CD4-positive, alpha-beta T cell (primary cell): ENCODE measurements at regions of chr12 and their contacts with region 1.

Region 1: GRCh38 chr12:12736759-12737676 is 19.9 kb downstream of the CDKN1B start:
- DNase-seq: peak in 13 of 14 experiments; percentile 15 to 87 (median 33)
- ATAC-seq: peak; percentile 82
- H3K4me3 ChIP-seq: peak overlapping the region; percentile 34
- H3K4me3 Mint-ChIP-seq: peak overlapping the region; percentile 58
- H3K27ac ChIP-seq: peak overlapping the region; percentile 34 to 40
- H3K27ac Mint-ChIP-seq: peak overlapping the region; percentile 85
- H3K4me1 ChIP-seq: peaks cover 30% of the 10 kb centered on the region
- H3K4me1 Mint-ChIP-seq: peaks cover 41% of the 10 kb centered on the region
- H3K27me3 ChIP-seq: no peaks in the 10 kb centered on the region
- H3K27me3 Mint-ChIP-seq: no peaks in the 10 kb centered on the region
- CTCF ChIP-seq: peak; percentile 71

Region 2: GRCh38 chr12:12645485-12645884 is 91.5 kb before region 1 on chr12:
- CTCF ChIA-PET with region 1: interaction called, 23 read pairs
- POLR2A ChIA-PET with region 1: interaction called, 27 read pairs
- intact Hi-C with region 1: loop called (anchors 1 to 2 kb)
- DNase-seq: peak in 12 of 14 experiments; percentile 4 to 79 (median 33)
- ATAC-seq: peak; percentile 91
- H3K4me3 ChIP-seq: no peak overlapping the region
- H3K4me3 Mint-ChIP-seq: no peak overlapping the region
- H3K27ac ChIP-seq: no peak overlapping the region
- H3K27ac Mint-ChIP-seq: peak overlapping the region; percentile 14
- H3K4me1 ChIP-seq: peaks cover 6% of the 10 kb centered on the region
- H3K4me1 Mint-ChIP-seq: peaks cover 6% of the 10 kb centered on the region
- H3K27me3 ChIP-seq: no peaks in the 10 kb centered on the region
- H3K27me3 Mint-ChIP-seq: no peaks in the 10 kb centered on the region
- CTCF ChIP-seq: peak; percentile 56

Region 3: DNA sequence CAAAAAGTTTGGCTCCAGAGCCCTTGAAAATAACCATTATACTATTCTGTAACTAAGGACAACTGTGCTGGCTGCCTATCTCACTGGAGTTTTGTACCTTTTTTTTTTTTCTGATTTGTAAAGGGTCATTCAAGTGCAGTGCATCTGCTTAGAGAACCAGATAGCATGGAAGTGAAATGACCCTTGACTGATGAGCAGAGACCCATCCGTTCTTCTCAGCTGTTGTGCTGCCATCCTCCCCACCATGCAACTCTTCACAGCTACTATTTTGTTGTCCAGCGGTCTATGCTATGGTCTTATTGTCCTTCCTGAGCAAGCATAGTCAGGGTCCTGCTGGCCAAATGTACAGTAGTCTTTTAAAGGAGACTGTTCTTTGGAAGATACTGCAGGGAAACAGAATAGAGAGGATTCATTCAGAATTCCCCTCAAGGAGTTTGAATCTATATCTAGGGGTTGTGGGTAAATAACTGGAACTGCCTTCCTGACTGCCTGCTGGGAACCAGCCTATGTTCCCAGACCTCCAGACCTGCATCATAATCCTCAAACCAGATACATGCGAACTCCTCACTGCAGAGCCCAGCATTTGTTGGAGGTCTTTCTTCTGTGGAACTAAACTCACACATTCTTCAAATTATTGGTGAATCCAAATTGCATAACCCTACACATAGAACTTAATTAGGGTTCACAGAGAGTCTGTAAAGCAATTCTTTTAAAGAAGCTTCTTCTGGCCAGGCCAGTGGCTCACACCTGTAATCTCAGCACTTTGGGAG is 82.1 kb before region 1 on chr12:
- CTCF ChIA-PET with region 1: interaction called, 16 read pairs
- POLR2A ChIA-PET with region 1: interaction called, 4 read pairs
- intact Hi-C with region 1: no loop called
- DNase-seq: no peak
- ATAC-seq: no peak
- H3K4me3 ChIP-seq: no peak overlapping the region
- H3K4me3 Mint-ChIP-seq: no peak overlapping the region
- H3K27ac ChIP-seq: no peak overlapping the region
- H3K27ac Mint-ChIP-seq: no peak overlapping the region
- H3K4me1 ChIP-seq: peaks cover 8% of the 10 kb centered on the region
- H3K4me1 Mint-ChIP-seq: peaks cover 17% of the 10 kb centered on the region
- H3K27me3 ChIP-seq: no peaks in the 10 kb centered on the region
- H3K27me3 Mint-ChIP-seq: no peaks in the 10 kb centered on the region
- CTCF ChIP-seq: no peak

Region 4: GRCh38 chr12:12696562-12697383 is 40.2 kb before region 1 on chr12:
- CTCF ChIA-PET with region 1: interaction called, 14 read pairs
- POLR2A ChIA-PET with region 1: interaction called, 36 read pairs
- intact Hi-C with region 1: loop called in 1 of 2 experiments (anchors 1 kb)
- DNase-seq: peak; percentile 90 to 97 (median 92)
- ATAC-seq: peak; percentile 83
- H3K4me3 ChIP-seq: peak overlapping the region; percentile 61
- H3K4me3 Mint-ChIP-seq: peak overlapping the region; percentile 94
- H3K27ac ChIP-seq: peak overlapping the region; percentile 96 to 97
- H3K27ac Mint-ChIP-seq: peak overlapping the region; percentile 100
- H3K4me1 ChIP-seq: peaks cover 7% of the 10 kb centered on the region
- H3K4me1 Mint-ChIP-seq: peaks cover 41% of the 10 kb centered on the region
- H3K27me3 ChIP-seq: no peaks in the 10 kb centered on the region
- H3K27me3 Mint-ChIP-seq: no peaks in the 10 kb centered on the region
- CTCF ChIP-seq: no peak